Panc1 (cell line): ENCODE measurements at regions of chr2 and their contacts with region 1.

Region 1: DNA sequence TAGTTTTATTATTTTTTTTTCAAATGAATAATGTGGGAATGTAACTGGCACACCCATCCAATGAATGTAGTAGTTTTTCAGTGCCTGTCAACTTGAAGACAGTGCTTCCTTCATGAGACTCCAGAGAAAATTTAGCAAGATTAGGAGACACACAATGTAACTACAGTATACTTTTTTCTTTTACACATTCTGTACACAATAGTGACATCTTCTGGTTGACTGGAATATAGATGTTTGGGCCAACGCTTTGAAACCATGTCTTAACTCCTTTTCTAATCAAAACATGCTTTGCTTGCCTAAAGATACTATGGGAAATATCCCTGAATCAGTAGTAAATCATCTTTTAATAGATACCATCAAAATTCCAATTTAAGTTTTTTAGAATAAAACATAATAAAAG is 229.5 kb upstream of the ZC3H15 start:
- DNase-seq: no peak
- ATAC-seq: peak; percentile 69; the same call in 1 of the 2 replicates
- H3K4me3 ChIP-seq: no peak overlapping the region
- H3K27ac ChIP-seq: no peak overlapping the region
- H3K4me1 ChIP-seq: no peaks in the 10 kb centered on the region
- H3K27me3 ChIP-seq: no peaks in the 10 kb centered on the region
- CTCF ChIP-seq: peak; percentile 66; the same call in 1 of the 2 replicates

Region 2: DNA sequence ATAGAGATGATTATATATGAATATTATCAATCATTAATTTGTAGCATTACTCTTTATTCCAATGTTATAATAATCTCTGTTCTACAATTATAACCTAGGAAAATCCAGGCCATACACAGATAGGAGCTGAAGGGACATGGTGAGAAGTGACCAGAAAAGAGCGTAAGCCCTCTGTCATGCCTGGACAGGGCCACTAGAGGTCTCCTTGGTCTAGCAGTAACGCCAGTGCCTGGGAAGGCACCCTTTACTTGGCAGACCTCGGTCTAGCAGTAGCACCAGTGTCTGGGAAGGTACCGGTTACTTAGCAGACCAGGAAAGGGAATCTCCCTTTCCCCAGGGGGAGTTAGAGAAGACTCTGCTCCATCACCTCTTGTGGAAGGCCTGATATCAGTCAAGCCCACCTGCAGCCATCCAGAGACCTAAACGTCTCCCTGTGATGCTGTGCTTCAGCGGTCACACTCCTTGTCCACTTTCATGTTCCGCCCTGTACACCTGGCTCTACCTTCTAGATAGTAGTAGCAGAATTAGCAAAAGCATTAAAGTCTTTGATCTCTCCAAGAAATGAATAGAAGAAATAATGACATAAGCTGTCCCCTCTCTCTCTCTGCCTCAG is 965.4 kb before region 1 on chr2:
- CTCF ChIA-PET with region 1: no interaction called
- POLR2A ChIA-PET with region 1: no interaction called
- in situ Hi-C with region 1: no loop called
- intact Hi-C with region 1: loop called (anchors 5 kb)
- DNase-seq: peak; percentile 12
- ATAC-seq: peak; percentile 94
- H3K4me3 ChIP-seq: no peak overlapping the region
- H3K27ac ChIP-seq: no peak overlapping the region
- H3K4me1 ChIP-seq: no peaks in the 10 kb centered on the region
- H3K27me3 ChIP-seq: no peaks in the 10 kb centered on the region
- CTCF ChIP-seq: peak; percentile 78

Region 3: DNA sequence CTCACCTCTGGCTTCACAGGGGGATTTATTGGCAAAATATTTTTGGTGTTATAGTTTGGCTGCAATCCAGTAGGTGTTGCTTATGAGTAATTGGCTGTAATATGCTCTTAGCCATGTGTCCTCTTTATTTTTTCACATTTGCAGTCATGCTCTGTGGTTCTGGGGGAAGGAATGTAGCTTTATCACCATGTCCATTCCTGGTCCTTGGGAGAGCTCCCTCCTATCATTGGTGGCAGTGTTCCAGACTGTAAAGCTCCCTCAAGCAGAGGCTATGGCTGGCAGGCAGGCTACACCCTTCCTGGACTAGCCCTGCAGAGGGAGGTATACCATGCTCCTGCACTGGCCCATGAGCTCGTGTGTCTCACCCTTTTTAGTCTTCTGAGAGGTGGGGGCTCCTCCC is 637.9 kb before region 1 on chr2:
- CTCF ChIA-PET with region 1: no interaction called
- POLR2A ChIA-PET with region 1: no interaction called
- in situ Hi-C with region 1: no loop called
- intact Hi-C with region 1: loop called (anchors 10 kb)
- DNase-seq: no peak
- ATAC-seq: no peak
- H3K4me3 ChIP-seq: no peak overlapping the region
- H3K27ac ChIP-seq: no peak overlapping the region
- H3K4me1 ChIP-seq: no peaks in the 10 kb centered on the region
- H3K27me3 ChIP-seq: no peaks in the 10 kb centered on the region
- CTCF ChIP-seq: no peak

Region 4: DNA sequence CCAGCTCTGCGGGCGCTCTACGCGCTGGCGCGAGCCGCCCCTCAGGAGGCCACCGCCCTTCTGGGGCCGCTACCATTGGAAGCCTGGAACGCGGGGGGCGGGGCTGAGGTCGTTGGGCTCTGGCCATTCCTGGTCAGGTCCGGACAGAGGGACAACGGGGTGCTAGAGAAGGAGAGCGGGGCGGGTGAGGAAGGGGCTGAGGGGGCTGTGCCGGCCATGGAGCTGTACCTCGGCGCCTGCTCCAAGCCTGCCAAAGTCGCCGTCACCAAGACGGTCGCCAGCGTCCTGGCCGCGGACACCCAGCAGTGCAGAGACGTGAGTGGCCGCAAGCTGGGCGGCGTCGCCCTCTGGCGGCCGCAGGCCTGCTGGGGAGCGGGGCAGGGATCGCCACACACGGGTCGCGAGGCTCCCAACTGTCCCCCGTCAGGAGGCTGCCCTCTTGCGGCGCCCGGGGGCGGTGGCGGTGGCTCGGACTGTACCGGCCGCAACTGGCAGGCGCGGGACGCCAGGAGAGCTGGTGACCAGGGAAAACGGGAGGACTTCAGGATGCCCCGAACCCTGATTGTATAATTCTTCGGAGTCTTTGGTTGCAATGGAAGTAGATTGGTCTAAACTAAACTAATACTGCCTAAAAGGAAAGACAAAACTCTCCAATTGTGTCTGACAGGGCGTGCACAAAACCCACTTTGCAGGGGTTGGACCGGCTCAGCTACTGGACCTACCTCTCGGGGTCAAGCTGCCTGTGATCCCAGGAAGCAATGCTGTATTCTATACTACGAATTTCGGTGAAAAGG is 517.7 kb before region 1 on chr2 and contains the start of gene FSIP2:
- CTCF ChIA-PET with region 1: no interaction called
- POLR2A ChIA-PET with region 1: no interaction called
- in situ Hi-C with region 1: no loop called
- intact Hi-C with region 1: loop called (anchors 2 kb)
- DNase-seq: no peak
- ATAC-seq: peak; percentile 99
- H3K4me3 ChIP-seq: peak within 1 kb of the TSS; percentile 40 to 46
- H3K27ac ChIP-seq: no peak within 1 kb of the TSS
- H3K4me1 ChIP-seq: no peaks in the 10 kb centered on the region
- H3K27me3 ChIP-seq: no peaks in the 10 kb centered on the region
- CTCF ChIP-seq: peak; percentile 96
- total RNA-seq, gene FSIP2: 0.03 TPM